ENCODE measurements at regions of chr10 and their contacts with region 1.

Region 1: GRCh38 chr10:102225646-102226541 is at the start of gene ELOVL3:
- DNase-seq: peak; percentile 81
- H3K4me3 ChIP-seq: peak within 1 kb of the TSS; percentile 49
- H3K27ac ChIP-seq: peak within 1 kb of the TSS; percentile 49
- H3K27me3 ChIP-seq: peaks cover 31% of the 10 kb centered on the region
- CTCF ChIP-seq: no peak
- polyA plus RNA-seq, gene ELOVL3: 0.16 and 0.27 TPM in 2 replicates

Region 2: GRCh38 chr10:102153093-102153620 is 72.7 kb before region 1 on chr10:
- CTCF ChIA-PET with region 1: no interaction called
- POLR2A ChIA-PET with region 1: no interaction called
- DNase-seq: no peak
- H3K4me3 ChIP-seq: peak overlapping the region; percentile 98
- H3K27ac ChIP-seq: no peak overlapping the region
- H3K27me3 ChIP-seq: no peaks in the 10 kb centered on the region
- CTCF ChIP-seq: no peak

Region 3: DNA sequence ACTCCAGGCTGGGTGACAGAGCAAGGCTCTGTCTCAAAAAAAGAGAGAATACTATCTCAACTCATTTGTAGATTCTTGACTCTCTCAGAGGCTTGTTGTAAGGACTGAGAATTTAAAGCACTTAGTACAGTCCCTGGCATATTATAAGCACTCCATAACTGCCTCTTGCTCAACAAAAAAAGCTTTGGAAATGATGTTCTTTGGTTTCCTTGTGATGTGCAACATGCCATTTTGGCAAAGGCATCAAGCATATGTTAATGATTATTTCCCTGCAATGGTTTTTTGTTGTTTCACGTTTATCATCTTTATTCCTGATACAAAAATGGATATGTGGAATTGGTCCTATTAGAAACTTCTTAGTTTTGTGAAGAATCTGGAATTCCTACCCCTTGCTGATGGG is 58.0 kb before region 1 on chr10:
- CTCF ChIA-PET with region 1: interaction called, 44 read pairs
- POLR2A ChIA-PET with region 1: interaction called, 3 read pairs
- DNase-seq: no peak
- H3K4me3 ChIP-seq: no peak overlapping the region
- H3K27ac ChIP-seq: no peak overlapping the region
- H3K27me3 ChIP-seq: no peaks in the 10 kb centered on the region
- CTCF ChIP-seq: no peak

Region 4: GRCh38 chr10:102254426-102254825 is 28.5 kb after region 1 on chr10:
- CTCF ChIA-PET with region 1: interaction called, 13 read pairs
- POLR2A ChIA-PET with region 1: no interaction called
- DNase-seq: no peak
- H3K4me3 ChIP-seq: no peak overlapping the region
- H3K27ac ChIP-seq: no peak overlapping the region
- H3K27me3 ChIP-seq: no peaks in the 10 kb centered on the region
- CTCF ChIP-seq: no peak

Region 5: DNA sequence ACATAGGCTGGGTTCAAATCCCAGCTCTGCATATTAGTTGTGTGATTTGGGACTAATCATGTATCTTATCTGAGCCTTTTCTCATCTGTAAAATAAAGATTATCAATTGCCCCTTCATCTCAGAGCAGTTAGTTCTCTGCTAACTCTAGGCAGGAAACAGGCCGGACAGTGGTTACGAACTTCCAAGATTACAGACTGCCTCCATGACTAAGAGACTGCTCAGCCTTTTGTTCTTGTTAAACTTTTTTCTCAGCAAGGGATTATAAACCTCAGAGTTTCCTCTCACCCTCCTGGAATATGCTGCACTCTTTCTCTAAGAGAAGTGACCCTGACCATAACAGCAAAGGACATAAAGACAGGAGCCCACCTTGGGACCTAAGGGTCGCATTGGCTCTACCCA is 117.1 kb after region 1 on chr10:
- CTCF ChIA-PET with region 1: interaction called, 442 read pairs
- POLR2A ChIA-PET with region 1: no interaction called
- DNase-seq: peak; percentile 39
- H3K4me3 ChIP-seq: no peak overlapping the region
- H3K27ac ChIP-seq: peak overlapping the region; percentile 63
- H3K27me3 ChIP-seq: no peaks in the 10 kb centered on the region
- CTCF ChIP-seq: no peak

Region 6: GRCh38 chr10:102384053-102384452 is 158.2 kb after region 1 on chr10:
- CTCF ChIA-PET with region 1: interaction called, 15 read pairs
- POLR2A ChIA-PET with region 1: no interaction called
- DNase-seq: no peak
- H3K4me3 ChIP-seq: no peak overlapping the region
- H3K27ac ChIP-seq: no peak overlapping the region
- H3K27me3 ChIP-seq: no peaks in the 10 kb centered on the region
- CTCF ChIP-seq: peak; percentile 27; the same call in 1 of the 2 replicates

Region 7: DNA sequence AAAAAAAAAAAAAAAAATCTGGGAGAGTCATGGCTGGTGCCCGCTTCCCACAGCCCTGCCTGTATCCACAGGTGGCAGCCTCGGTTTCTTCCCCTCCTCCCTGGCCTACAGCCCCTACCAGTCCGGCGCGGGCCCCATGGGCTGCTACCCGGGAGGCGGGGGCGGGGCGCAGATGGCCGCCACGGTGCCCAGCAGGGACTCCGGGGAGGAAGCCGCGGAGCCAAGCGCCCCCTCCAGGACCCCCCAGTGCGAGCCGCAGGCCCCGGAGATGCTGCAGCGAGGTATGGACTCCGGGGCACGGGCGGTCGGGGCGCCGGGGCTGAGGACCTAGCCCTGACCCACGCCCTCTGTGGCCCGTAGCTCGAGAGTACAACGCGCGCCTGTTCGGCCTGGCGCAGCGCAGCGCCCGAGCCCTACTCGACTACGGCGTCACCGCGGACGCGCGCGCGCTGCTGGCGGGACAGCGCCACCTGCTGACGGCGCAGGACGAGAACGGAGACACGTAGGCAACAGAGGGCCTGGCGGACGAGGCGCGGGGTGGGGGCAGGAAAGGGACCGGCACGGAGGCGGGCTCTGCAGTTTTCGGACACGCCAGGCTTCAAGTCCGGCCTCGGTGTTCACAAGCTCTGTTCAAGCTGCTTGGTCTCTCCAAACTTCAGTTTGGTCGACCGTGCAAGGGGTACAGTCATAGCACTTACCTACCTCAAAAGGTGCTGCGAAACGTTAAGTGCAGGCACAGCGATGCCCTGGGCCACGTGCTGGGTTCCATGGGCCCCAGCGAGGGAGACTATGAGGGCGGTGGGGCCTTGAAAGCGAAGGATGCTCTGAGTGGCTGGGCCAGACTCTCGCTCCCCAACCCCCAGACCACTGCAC is 173.6 kb after region 1 on chr10:
- CTCF ChIA-PET with region 1: interaction called, 24 read pairs
- POLR2A ChIA-PET with region 1: no interaction called
- DNase-seq: peak; percentile 59
- H3K4me3 ChIP-seq: peak overlapping the region; percentile 50
- H3K27ac ChIP-seq: peak overlapping the region; percentile 47
- H3K27me3 ChIP-seq: no peaks in the 10 kb centered on the region
- CTCF ChIP-seq: peak; percentile 78

Measured in AG04450 (cell line).